Activated CD8-positive, alpha-beta T cell treated with anti-CD3 and anti-CD28 coated beads, Interleukin-2, amount 10 ng/mL, durations not matched to agents 7 days and 5 days (primary cell): ENCODE measurements at regions of chr2 and their contacts with region 1.

Region 1: DNA sequence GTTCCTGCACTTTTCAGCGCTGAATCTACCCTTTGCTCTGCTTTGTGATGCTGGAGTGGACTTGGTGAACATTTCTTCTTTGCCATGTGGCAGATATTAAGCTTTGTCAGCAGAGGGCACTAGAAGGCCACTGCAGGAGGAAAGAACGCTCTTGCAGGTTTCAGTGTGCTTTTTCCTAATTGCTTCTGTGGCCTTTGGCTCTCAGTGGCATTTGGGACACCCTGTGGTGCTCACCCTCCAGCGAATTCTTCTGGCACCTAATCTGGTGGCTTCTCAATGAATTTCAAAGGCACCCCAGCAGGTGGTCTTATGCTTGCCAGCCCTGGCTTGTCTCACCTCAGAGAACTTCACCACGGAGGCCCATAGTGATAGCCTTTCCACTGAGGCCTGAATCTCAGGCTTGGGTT is 146.7 kb downstream of the MYO3B start:
- DNase-seq: peak; percentile 69
- ATAC-seq: peak; percentile 64
- H3K4me3 Mint-ChIP-seq: no peak overlapping the region
- H3K27ac Mint-ChIP-seq: no peak overlapping the region
- H3K4me1 Mint-ChIP-seq: peaks cover 5% of the 10 kb centered on the region
- H3K27me3 Mint-ChIP-seq: peaks cover 2% of the 10 kb centered on the region

Region 2: GRCh38 chr2:170276902-170277629 is 47.6 kb before region 1 on chr2:
- CTCF ChIA-PET with region 1: no interaction called
- POLR2A ChIA-PET with region 1: no interaction called
- DNase-seq: no peak
- ATAC-seq: no peak
- H3K4me3 Mint-ChIP-seq: no peak overlapping the region
- H3K27ac Mint-ChIP-seq: no peak overlapping the region
- H3K4me1 Mint-ChIP-seq: no peaks in the 10 kb centered on the region
- H3K27me3 Mint-ChIP-seq: peaks cover 40% of the 10 kb centered on the region

Region 3: DNA sequence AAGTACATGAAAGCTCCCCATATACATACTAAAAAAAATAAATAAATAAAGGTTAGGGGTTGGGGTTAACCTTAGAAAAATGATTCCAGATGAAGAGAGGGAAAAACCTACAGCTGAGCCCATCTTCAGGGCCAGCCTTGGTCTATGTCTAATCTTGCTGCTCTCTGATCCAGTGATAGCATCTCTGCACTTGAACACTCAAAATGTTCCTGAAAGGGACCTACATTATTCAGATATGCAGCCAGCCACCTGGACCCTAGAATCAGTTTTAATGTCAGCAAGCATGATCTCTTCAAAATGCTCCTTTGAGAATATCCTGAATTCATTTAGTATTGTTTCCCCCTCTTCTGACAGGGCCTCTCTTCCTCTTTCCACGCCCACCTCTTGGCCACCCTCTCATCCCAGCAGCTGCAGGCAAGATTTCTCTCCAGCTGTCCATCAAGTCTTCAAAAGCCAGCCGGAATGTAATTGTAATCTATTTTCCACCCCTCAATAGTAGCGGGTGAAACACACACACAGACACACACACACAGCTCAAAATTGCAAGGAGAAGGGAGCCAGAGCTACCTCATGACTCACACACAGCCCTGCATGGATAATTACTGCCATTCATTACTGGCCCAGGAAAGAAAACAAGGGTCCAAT is 11.2 kb before region 1 on chr2:
- CTCF ChIA-PET with region 1: interaction called, 13 read pairs
- POLR2A ChIA-PET with region 1: no interaction called
- DNase-seq: no peak
- ATAC-seq: no peak
- H3K4me3 Mint-ChIP-seq: no peak overlapping the region
- H3K27ac Mint-ChIP-seq: no peak overlapping the region
- H3K4me1 Mint-ChIP-seq: no peaks in the 10 kb centered on the region
- H3K27me3 Mint-ChIP-seq: peaks cover 28% of the 10 kb centered on the region

Region 4: DNA sequence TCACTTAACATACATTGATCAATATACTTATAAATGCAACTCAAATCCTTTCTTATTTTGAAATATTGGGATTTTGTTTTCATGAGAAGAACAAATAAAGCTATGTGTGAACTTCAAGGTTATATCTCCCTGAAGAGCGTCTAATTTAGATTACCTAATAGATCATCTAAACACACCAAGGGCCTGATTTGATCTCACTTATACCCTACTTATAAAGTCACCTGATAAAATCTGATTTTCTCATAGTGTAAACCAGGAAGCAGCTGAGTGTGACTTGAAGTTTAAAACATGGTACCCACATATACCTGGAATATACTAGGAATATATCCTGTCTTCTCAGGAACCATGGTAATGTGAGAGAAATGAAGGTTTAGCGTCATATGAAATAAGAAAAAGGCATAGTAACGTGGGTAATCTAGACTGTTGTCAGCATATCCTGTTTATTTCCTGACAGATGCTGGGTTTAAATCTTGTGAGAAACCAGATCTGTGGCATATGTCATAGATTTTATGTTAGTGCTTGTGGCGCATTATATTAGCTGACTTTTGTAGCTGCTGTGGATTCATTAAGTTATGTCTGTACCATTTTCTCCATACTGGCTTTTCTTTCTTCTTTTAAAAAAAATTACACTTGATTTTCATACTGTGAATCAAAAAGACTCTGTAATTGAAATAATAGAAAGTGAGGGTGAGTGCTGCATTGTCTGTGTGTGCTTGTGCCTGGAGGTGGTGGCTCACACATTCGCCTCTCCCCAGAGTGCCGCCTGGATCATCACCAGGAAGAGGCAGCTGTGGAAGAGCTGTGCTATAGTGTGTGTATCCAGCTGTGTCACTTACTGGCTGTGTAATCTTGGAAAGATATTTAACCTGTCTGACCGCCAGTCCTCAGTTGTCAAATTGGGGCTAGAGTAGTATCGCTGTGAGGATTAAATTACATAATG is 17.3 kb after region 1 on chr2:
- CTCF ChIA-PET with region 1: interaction called, 11 read pairs
- POLR2A ChIA-PET with region 1: interaction called, 3 read pairs
- DNase-seq: no peak
- ATAC-seq: no peak
- H3K4me3 Mint-ChIP-seq: no peak overlapping the region
- H3K27ac Mint-ChIP-seq: peak overlapping the region; percentile 57
- H3K4me1 Mint-ChIP-seq: peaks cover 34% of the 10 kb centered on the region
- H3K27me3 Mint-ChIP-seq: peaks cover 2% of the 10 kb centered on the region

Region 5: GRCh38 chr2:170369894-170370293 is 45.3 kb after region 1 on chr2:
- CTCF ChIA-PET with region 1: interaction called, 67 read pairs
- POLR2A ChIA-PET with region 1: no interaction called
- DNase-seq: no peak
- ATAC-seq: no peak
- H3K4me3 Mint-ChIP-seq: no peak overlapping the region
- H3K27ac Mint-ChIP-seq: no peak overlapping the region
- H3K4me1 Mint-ChIP-seq: peaks cover 56% of the 10 kb centered on the region
- H3K27me3 Mint-ChIP-seq: peaks cover 18% of the 10 kb centered on the region

Region 6: GRCh38 chr2:170815746-170816503 is 491.3 kb after region 1 on chr2:
- CTCF ChIA-PET with region 1: interaction called, 10 read pairs
- POLR2A ChIA-PET with region 1: no interaction called
- DNase-seq: peak; percentile 77
- ATAC-seq: peak; percentile 50
- H3K4me3 Mint-ChIP-seq: peak overlapping the region; percentile 77
- H3K27ac Mint-ChIP-seq: no peak overlapping the region
- H3K4me1 Mint-ChIP-seq: peaks cover 53% of the 10 kb centered on the region
- H3K27me3 Mint-ChIP-seq: peaks cover 85% of the 10 kb centered on the region